Dorsolateral prefrontal cortex (tissue), 120 donors: ENCODE measurements at regions of chr12 and their contacts with region 1.

Region 1: GRCh38 chr12:113912760-113913329 is 53.3 kb downstream of the RBM19 start:
- DNase-seq: peak; percentile 65 to 87 (median 80)
- H3K4me3 ChIP-seq: no peak overlapping the region
- H3K27ac ChIP-seq: no peak overlapping the region
- H3K27me3 ChIP-seq: no peaks in the 10 kb centered on the region
- CTCF ChIP-seq: peak; percentile 72 to 99 (median 93)

Region 2: DNA sequence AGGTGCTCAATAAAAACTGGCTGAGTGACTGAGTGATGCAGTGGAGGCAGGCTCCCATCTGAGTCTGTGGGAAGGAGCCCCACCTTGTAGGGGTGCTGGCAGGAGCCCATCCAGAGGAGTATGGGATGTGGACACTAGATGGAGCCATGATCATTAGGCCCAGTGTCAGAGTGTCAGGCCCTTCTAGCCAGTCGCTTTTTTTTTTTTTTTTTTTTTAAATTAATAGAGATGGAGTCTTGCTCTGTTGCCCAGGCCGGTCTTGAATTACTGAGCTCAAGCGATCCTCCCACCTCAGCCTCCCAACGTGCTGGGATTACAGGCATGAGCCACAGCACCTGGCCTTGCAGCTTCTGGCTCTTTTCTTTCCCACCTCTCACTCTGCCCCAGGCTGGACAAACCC is 715.8 kb before region 1 on chr12:
- intact Hi-C with region 1: loop called in 1 of 2 experiments (anchors 10 kb)
- DNase-seq: peak in 7 of 10 donors; percentile 30 to 70 (median 61)
- H3K4me3 ChIP-seq: no peak overlapping the region
- H3K27ac ChIP-seq: no peak overlapping the region
- H3K27me3 ChIP-seq: no peaks in the 10 kb centered on the region
- CTCF ChIP-seq: peak in 55 of 56 donors; percentile 45 to 82 (median 70)

Region 3: DNA sequence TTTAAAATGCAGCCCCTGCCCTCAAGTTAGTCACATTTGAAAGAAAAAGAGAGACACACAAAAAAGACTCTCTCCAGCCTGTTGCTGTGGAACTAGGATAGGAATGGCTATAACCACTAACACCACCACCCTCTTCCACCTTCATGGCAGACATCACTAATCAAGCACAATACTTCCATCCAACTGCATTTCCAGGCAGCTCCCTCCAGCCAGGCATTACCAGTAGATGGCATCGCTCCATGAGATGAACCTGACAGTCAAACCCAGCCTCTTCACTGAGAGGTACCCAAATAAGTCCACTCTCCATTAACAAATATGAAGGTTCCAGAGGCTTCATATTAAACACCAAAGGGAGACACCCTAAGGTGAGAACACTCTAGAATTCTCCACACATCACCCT is 602.4 kb before region 1 on chr12:
- intact Hi-C with region 1: loop called (anchors 5 to 10 kb)
- DNase-seq: no peak
- H3K4me3 ChIP-seq: no peak overlapping the region
- H3K27ac ChIP-seq: no peak overlapping the region
- H3K27me3 ChIP-seq: no peaks in the 10 kb centered on the region
- CTCF ChIP-seq: peak in 1 of 56 donors; percentile 9

Region 4: GRCh38 chr12:113439606-113440030 is 473.2 kb before region 1 on chr12:
- intact Hi-C with region 1: loop called in 1 of 2 experiments (anchors 5 kb)
- DNase-seq: peak in 7 of 10 donors; percentile 14 to 60 (median 48)
- H3K4me3 ChIP-seq: no peak overlapping the region
- H3K27ac ChIP-seq: no peak overlapping the region
- H3K27me3 ChIP-seq: peaks cover 0 to 21% (median 0%) of the 10 kb centered on the region in 45 donors
- CTCF ChIP-seq: peak; percentile 28 to 78 (median 64)

Region 5: DNA sequence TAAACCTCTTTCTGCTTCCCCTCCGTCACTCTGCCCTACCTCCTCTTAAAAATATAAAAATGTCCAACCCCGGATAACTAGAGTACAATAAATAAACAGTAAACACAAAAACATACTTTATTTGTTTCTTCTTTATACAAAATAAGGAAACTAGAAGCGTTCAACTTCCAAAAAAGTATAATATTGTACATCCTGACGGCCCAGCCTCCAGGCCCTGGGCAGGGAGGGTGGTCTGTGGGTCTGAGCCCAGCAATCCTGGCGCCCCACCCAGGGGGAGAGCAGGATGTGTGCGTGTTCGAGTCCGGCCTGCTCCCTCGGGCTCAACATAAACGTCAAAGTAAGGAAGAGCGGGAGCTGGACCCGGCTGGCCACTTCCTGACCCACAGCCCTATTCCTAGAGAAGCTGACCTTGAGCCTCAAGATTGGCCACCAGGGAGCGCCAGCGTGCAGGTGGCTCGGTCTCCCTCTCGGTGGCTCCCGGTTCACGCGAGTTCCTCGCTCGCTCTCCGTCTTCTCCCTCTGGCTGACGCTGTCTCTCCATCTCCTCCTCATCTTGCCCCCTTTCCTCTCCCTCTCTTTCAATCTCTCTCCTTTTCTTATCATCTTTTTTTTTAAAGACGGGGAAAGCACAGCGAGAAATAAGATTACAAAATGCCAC is 450.6 kb before region 1 on chr12:
- intact Hi-C with region 1: loop called (anchors 2 to 10 kb)
- DNase-seq: peak; percentile 54 to 81 (median 66)
- H3K4me3 ChIP-seq: peak overlapping the region in 33 of 59 donors; percentile 1 to 56 (median 31)
- H3K27ac ChIP-seq: no peak overlapping the region
- H3K27me3 ChIP-seq: peaks cover 1 to 85% (median 59%) of the 10 kb centered on the region in 45 donors
- CTCF ChIP-seq: peak; percentile 43 to 87 (median 77)

Region 6: GRCh38 chr12:113647048-113647447 is 265.8 kb before region 1 on chr12:
- intact Hi-C with region 1: loop called in 1 of 2 experiments (anchors 5 kb)
- DNase-seq: peak in 5 of 10 donors; percentile 20 to 54 (median 44)
- H3K4me3 ChIP-seq: no peak overlapping the region
- H3K27ac ChIP-seq: no peak overlapping the region
- H3K27me3 ChIP-seq: peaks cover 0 to 44% (median 27%) of the 10 kb centered on the region in 45 donors
- CTCF ChIP-seq: peak in 46 of 56 donors; percentile 11 to 55 (median 34)

Region 7: GRCh38 chr12:113990250-113991223 is 77.7 kb after region 1 on chr12:
- intact Hi-C with region 1: no loop called
- DNase-seq: peak in 1 of 10 donors; percentile 30
- H3K4me3 ChIP-seq: no peak overlapping the region
- H3K27ac ChIP-seq: no peak overlapping the region
- H3K27me3 ChIP-seq: peaks cover 0 to 38% (median 12%) of the 10 kb centered on the region in 45 donors
- CTCF ChIP-seq: no peak

Region 8: DNA sequence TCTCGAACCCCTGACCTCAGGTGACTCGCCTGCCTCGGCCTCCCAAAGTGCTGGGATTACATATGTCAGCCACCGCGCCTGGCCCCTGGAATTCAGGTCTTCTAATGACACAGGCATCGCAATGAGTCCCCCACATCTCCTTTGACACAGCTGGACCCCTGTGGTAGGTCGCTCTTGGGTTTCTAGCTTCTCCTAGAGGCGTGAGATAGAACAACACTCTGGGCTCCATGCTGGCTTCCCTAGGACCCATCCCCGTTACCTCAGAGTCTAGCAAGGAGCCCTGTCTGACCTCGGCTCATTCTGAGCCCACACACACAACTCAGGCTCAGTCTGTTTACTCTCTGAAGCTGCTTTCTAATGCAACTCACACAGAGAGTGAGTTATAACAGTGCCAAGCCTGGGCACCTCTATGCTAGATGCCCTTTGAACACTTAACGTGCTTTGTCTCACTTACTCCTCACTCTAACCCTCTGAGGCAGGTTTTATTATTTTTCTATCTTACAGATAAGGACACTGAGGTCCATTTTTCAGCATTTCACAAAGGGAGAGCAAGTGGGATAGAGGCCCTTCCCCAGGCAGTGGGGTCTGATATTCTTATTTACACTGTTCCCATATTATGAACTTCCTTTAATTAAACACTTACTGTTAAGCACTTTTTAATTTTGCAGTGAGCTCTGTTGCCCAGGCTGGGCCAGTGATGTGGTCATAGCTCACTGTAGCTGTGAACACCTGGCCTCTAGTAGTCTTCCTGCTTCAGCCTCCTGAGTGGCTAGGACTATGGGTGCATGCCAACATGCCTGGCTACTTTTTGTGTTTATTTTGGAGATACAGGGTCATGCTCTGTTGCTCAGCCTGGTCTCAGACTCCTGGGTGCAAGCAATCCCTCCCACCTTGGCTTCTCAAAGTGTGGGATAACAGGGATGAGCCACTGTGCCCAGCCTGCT is 93.9 kb after region 1 on chr12:
- intact Hi-C with region 1: no loop called
- DNase-seq: no peak
- H3K4me3 ChIP-seq: no peak overlapping the region
- H3K27ac ChIP-seq: no peak overlapping the region
- H3K27me3 ChIP-seq: peaks cover 0 to 47% (median 12%) of the 10 kb centered on the region in 45 donors
- CTCF ChIP-seq: no peak